ENCODE measurements at regions of chr17 and their contacts with region 1.

Region 1: DNA sequence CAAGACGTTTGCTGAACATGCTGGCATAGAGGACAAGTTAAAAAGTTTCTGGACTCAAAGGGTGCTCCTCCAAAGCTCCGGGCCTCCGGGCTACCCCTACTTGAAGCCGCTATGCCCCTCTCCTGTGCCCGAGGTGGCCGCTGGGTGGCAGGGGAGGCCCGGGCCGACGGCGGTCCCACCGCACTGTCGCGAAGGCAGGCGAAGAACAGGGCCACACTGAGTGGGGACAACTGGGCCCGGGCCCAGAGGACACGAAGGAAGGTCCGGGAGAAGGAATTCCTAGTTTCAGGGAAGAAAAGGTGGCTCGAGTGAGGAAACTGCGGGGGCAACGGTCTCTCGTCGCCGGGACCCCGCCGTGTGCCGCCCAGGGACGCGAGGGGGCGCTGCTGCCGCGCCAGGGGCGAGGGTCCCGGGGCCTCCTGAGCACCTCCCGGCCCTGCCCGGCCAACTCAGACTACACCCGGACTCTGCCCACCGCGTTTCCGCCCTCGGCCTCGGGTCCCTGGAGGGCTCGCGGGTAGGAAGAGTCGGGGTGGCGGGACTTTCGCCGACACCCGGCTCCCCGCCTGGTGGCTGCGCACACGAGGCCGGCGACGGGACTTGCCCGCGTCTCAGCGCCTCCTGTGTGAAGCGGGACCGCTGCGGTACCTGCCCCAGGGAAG is 885 bp upstream of the CHCT1 start:
- DNase-seq: peak; percentile 77
- H3K4me3 ChIP-seq: peak overlapping the region; percentile 31 to 61 (median 41)
- H3K27ac ChIP-seq: peak overlapping the region in 3 of 4 donors; percentile 3 to 41 (median 18)
- H3K4me1 ChIP-seq: peaks cover 0 to 18% (median 6%) of the 10 kb centered on the region in 4 donors
- H3K27me3 ChIP-seq: no peaks in the 10 kb centered on the region
- CTCF ChIP-seq: peak in 4 of 5 experiments; percentile 90 to 98 (median 94)
- EP300 ChIP-seq: no peak
- POLR2A ChIP-seq: no peak

Region 2: GRCh38 chr17:60135151-60135950 is 286.1 kb before region 1 on chr17:
- in situ Hi-C with region 1: loop called in 3 of 4 experiments (anchors 25 kb)
- intact Hi-C with region 1: no loop called
- DNase-seq: peak; percentile 92
- H3K4me3 ChIP-seq: peak overlapping the region; percentile 32 to 73 (median 65)
- H3K27ac ChIP-seq: peak overlapping the region; percentile 71 to 84 (median 76)
- H3K4me1 ChIP-seq: peaks cover 5 to 26% (median 16%) of the 10 kb centered on the region in 4 donors
- H3K27me3 ChIP-seq: peaks cover 28% of the 10 kb centered on the region
- CTCF ChIP-seq: no peak
- EP300 ChIP-seq: no peak
- POLR2A ChIP-seq: peak; percentile 80

Region 3: GRCh38 chr17:60231234-60231633 is 190.2 kb before region 1 on chr17:
- in situ Hi-C with region 1: loop called in 1 of 4 experiments (anchors 10 kb)
- intact Hi-C with region 1: no loop called
- DNase-seq: no peak
- H3K4me3 ChIP-seq: no peak overlapping the region
- H3K27ac ChIP-seq: no peak overlapping the region
- H3K4me1 ChIP-seq: no peaks in the 10 kb centered on the region
- H3K27me3 ChIP-seq: no peaks in the 10 kb centered on the region
- CTCF ChIP-seq: peak; percentile 23 to 42 (median 30)
- EP300 ChIP-seq: no peak
- POLR2A ChIP-seq: no peak

Region 4: GRCh38 chr17:60398227-60398959 is 23.0 kb before region 1 on chr17:
- in situ Hi-C with region 1: no loop called
- intact Hi-C with region 1: loop called (anchors 1 kb)
- DNase-seq: no peak
- H3K4me3 ChIP-seq: no peak overlapping the region
- H3K27ac ChIP-seq: peak overlapping the region in 2 of 4 donors; percentile 18 to 64
- H3K4me1 ChIP-seq: peaks cover 0 to 1% (median 0%) of the 10 kb centered on the region in 4 donors
- H3K27me3 ChIP-seq: no peaks in the 10 kb centered on the region
- CTCF ChIP-seq: no peak
- EP300 ChIP-seq: no peak
- POLR2A ChIP-seq: no peak

Measured in transverse colon (tissue), 4 donors.